ENCODE measurements at regions of chr1 and their contacts with region 1.

Region 1: GRCh38 chr1:248886237-248886895 is 19.7 kb upstream of the PGBD2 start:
- DNase-seq: no peak
- H3K4me3 ChIP-seq: no peak overlapping the region
- H3K27ac ChIP-seq: peak overlapping the region in 1 of 2 experiments; percentile 30
- H3K4me1 ChIP-seq: peaks cover 0 to 37% (median 15%) of the 10 kb centered on the region in 4 experiments
- H3K27me3 ChIP-seq: no peaks in the 10 kb centered on the region

Region 2: GRCh38 chr1:248686815-248687214 is 199.6 kb before region 1 on chr1:
- CTCF ChIA-PET with region 1: no interaction called
- POLR2A ChIA-PET with region 1: no interaction called
- DNase-seq: peak; percentile 53 to 63 (median 62)
- H3K4me3 ChIP-seq: no peak overlapping the region
- H3K27ac ChIP-seq: no peak overlapping the region
- H3K4me1 ChIP-seq: no peaks in the 10 kb centered on the region
- H3K27me3 ChIP-seq: no peaks in the 10 kb centered on the region

Region 3: GRCh38 chr1:248858891-248859889 is 27.2 kb before region 1 on chr1 and contains the start of gene ZNF692:
- CTCF ChIA-PET with region 1: interaction called, 11 read pairs
- POLR2A ChIA-PET with region 1: no interaction called
- DNase-seq: peak; percentile 98 to 99 (median 99)
- H3K4me3 ChIP-seq: peak within 1 kb of the TSS; percentile 20 to 85 (median 72)
- H3K27ac ChIP-seq: peak within 1 kb of the TSS; percentile 81 to 84
- H3K4me1 ChIP-seq: peaks cover 2 to 48% (median 43%) of the 10 kb centered on the region in 4 experiments
- H3K27me3 ChIP-seq: no peaks in the 10 kb centered on the region

Region 4: GRCh38 chr1:248873409-248873992 is 12.9 kb before region 1 on chr1:
- CTCF ChIA-PET with region 1: interaction called, 18 read pairs
- POLR2A ChIA-PET with region 1: no interaction called
- DNase-seq: peak; percentile 94 to 98 (median 97)
- H3K4me3 ChIP-seq: peak overlapping the region; percentile 76 to 92 (median 86)
- H3K27ac ChIP-seq: peak overlapping the region; percentile 79 to 94
- H3K4me1 ChIP-seq: peaks cover 2 to 16% (median 7%) of the 10 kb centered on the region in 4 experiments
- H3K27me3 ChIP-seq: no peaks in the 10 kb centered on the region

Region 5: GRCh38 chr1:248897412-248898337 is 11.3 kb after region 1 on chr1:
- CTCF ChIA-PET with region 1: interaction called, 24 read pairs
- POLR2A ChIA-PET with region 1: no interaction called
- DNase-seq: no peak
- H3K4me3 ChIP-seq: no peak overlapping the region
- H3K27ac ChIP-seq: no peak overlapping the region
- H3K4me1 ChIP-seq: no peaks in the 10 kb centered on the region
- H3K27me3 ChIP-seq: no peaks in the 10 kb centered on the region

Region 6: GRCh38 chr1:248924696-248925532 is 38.5 kb after region 1 on chr1:
- CTCF ChIA-PET with region 1: interaction called, 12 read pairs
- POLR2A ChIA-PET with region 1: no interaction called
- DNase-seq: peak; percentile 78 to 91 (median 89)
- H3K4me3 ChIP-seq: peak overlapping the region in 2 of 7 experiments; percentile 18 to 43
- H3K27ac ChIP-seq: no peak overlapping the region
- H3K4me1 ChIP-seq: peaks cover 5 to 46% (median 17%) of the 10 kb centered on the region in 4 experiments
- H3K27me3 ChIP-seq: no peaks in the 10 kb centered on the region